K562 (cell line): ENCODE measurements at regions of chr1 and their contacts with region 1.

Region 1: GRCh38 chr1:110630839-110631663 is 24.9 kb upstream of the KCNA2 start:
- DNase-seq: peak; percentile 82 to 87 (median 84)
- ATAC-seq: peak; percentile 100
- H3K4me3 ChIP-seq: no peak overlapping the region
- H3K27ac ChIP-seq: no peak overlapping the region
- H3K4me1 ChIP-seq: no peaks in the 10 kb centered on the region
- H3K27me3 ChIP-seq: peaks cover 0 to 18% of the 10 kb centered on the region in 2 experiments; a peak in 2 of 5 replicates
- CTCF ChIP-seq: peak; percentile 89 to 96 (median 92)
- EP300 ChIP-seq: no peak
- POLR2A ChIP-seq: no peak
- RAD21 ChIP-seq: peak; percentile 82 to 92

Region 2: DNA sequence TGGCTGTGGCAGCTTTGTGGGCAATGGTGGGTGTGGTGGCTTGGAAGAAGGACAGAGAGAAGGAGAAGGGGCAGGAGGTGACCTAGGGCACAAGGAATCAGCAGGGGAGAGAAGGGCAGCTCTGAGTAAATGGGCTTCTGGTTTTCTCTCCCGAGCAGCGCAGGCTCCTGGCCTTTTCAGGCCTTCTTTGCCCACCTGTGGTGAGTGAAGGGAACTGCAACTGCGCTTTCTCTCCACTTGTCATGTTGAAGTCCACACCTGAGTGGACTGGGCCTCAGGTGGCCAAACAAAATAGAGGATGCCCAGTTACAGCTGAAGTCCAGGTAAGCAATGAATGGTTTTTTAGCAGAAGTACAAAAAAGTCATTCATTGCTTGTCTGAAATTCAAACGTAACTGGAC is 82.7 kb before region 1 on chr1:
- CTCF ChIA-PET with region 1: no interaction called
- POLR2A ChIA-PET with region 1: no interaction called
- in situ Hi-C with region 1: no loop called
- intact Hi-C with region 1: no loop called
- DNase-seq: peak; percentile 51 to 65 (median 56)
- ATAC-seq: peak; percentile 97
- H3K4me3 ChIP-seq: no peak overlapping the region
- H3K27ac ChIP-seq: no peak overlapping the region
- H3K4me1 ChIP-seq: no peaks in the 10 kb centered on the region
- H3K27me3 ChIP-seq: peaks cover 6 to 16% of the 10 kb centered on the region in 2 experiments; a peak in 3 of 5 replicates
- CTCF ChIP-seq: peak; percentile 62 to 70 (median 64)
- EP300 ChIP-seq: no peak
- POLR2A ChIP-seq: no peak
- RAD21 ChIP-seq: peak in 1 of 2 experiments; percentile 31; a peak in 1 of 4 replicates

Region 3: GRCh38 chr1:110766025-110766647 is 135.1 kb after region 1 on chr1:
- CTCF ChIA-PET with region 1: interaction called, 17 read pairs
- POLR2A ChIA-PET with region 1: interaction called, 5 read pairs
- in situ Hi-C with region 1: no loop called
- intact Hi-C with region 1: loop called (anchors 1 kb)
- DNase-seq: peak; percentile 57 to 65 (median 58)
- ATAC-seq: peak; percentile 74; the same call in 2 of the 3 replicates
- H3K4me3 ChIP-seq: no peak overlapping the region
- H3K27ac ChIP-seq: no peak overlapping the region
- H3K4me1 ChIP-seq: no peaks in the 10 kb centered on the region
- H3K27me3 ChIP-seq: no peaks in the 10 kb centered on the region; a peak in 1 of 5 replicates
- CTCF ChIP-seq: peak; percentile 78 to 95 (median 80)
- EP300 ChIP-seq: no peak
- POLR2A ChIP-seq: no peak
- RAD21 ChIP-seq: peak; percentile 63 to 90

Region 4: GRCh38 chr1:110990536-110990935 is 359.5 kb after region 1 on chr1:
- CTCF ChIA-PET with region 1: interaction called, 9 read pairs
- POLR2A ChIA-PET with region 1: no interaction called
- in situ Hi-C with region 1: no loop called
- intact Hi-C with region 1: loop called (anchors 2 kb)
- DNase-seq: no peak
- ATAC-seq: no peak
- H3K4me3 ChIP-seq: no peak overlapping the region
- H3K27ac ChIP-seq: no peak overlapping the region
- H3K4me1 ChIP-seq: no peaks in the 10 kb centered on the region
- H3K27me3 ChIP-seq: peaks cover 0 to 12% of the 10 kb centered on the region in 2 experiments; a peak in 2 of 5 replicates
- CTCF ChIP-seq: no peak
- EP300 ChIP-seq: no peak
- POLR2A ChIP-seq: no peak
- RAD21 ChIP-seq: no peak

Region 5: DNA sequence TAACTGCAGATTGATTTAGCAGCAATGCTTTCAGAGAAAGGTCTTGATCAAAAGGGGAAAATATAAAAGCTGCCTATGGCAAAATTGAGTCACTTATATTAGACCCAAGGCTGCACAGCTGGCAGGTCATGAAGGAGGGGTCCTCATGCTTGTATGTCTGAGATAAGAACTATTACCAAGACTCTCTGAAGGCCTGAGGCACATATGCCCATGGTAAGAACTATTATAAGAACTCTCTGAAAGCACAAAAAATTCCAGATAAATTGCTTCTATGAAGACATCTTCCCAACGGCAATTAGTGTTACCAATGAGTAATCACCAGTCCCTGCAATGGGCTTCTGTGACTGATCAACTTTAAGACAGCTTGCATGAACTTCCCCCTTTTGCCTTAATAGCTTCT is 375.5 kb after region 1 on chr1:
- CTCF ChIA-PET with region 1: no interaction called
- POLR2A ChIA-PET with region 1: no interaction called
- in situ Hi-C with region 1: loop called (anchors 5 kb)
- intact Hi-C with region 1: no loop called
- DNase-seq: no peak
- ATAC-seq: no peak
- H3K4me3 ChIP-seq: no peak overlapping the region
- H3K27ac ChIP-seq: no peak overlapping the region
- H3K4me1 ChIP-seq: no peaks in the 10 kb centered on the region
- H3K27me3 ChIP-seq: 0 out of 5 replicates have a peak, but pooled peaks cover 0 to 6% of the 10 kb centered on the region in 2 experiments
- CTCF ChIP-seq: no peak
- EP300 ChIP-seq: no peak
- POLR2A ChIP-seq: no peak
- RAD21 ChIP-seq: no peak